Mammary epithelial cell (primary cell): ENCODE measurements at regions of chr9 and their contacts with region 1.

Region 1: GRCh38 chr9:122991370-122991830 is 42.1 kb upstream of the GPR21 start:
- DNase-seq: peak; percentile 89
- H3K4me3 ChIP-seq: no peak overlapping the region
- H3K27ac ChIP-seq: peak overlapping the region; percentile 34
- H3K4me1 ChIP-seq: peaks cover 6% of the 10 kb centered on the region
- H3K27me3 ChIP-seq: no peaks in the 10 kb centered on the region
- CTCF ChIP-seq: peak; percentile 66 to 72

Region 2: GRCh38 chr9:122464633-122465567 is 526.5 kb before region 1 on chr9:
- CTCF ChIA-PET with region 1: no interaction called
- dilution Hi-C with region 1: no loop called
- in situ Hi-C with region 1: no loop called
- intact Hi-C with region 1: loop called (anchors 2 kb)
- DNase-seq: peak; percentile 80
- H3K4me3 ChIP-seq: peak overlapping the region; percentile 47 to 72 (median 60)
- H3K27ac ChIP-seq: no peak overlapping the region
- H3K4me1 ChIP-seq: peaks cover 5% of the 10 kb centered on the region
- H3K27me3 ChIP-seq: no peaks in the 10 kb centered on the region
- CTCF ChIP-seq: peak; percentile 73 to 82

Region 3: GRCh38 chr9:122860317-122861142 is 130.9 kb before region 1 on chr9:
- CTCF ChIA-PET with region 1: no interaction called
- dilution Hi-C with region 1: no loop called
- in situ Hi-C with region 1: loop called in 1 of 2 experiments (anchors 25 kb)
- intact Hi-C with region 1: no loop called
- DNase-seq: no peak
- H3K4me3 ChIP-seq: no peak overlapping the region
- H3K27ac ChIP-seq: no peak overlapping the region
- H3K4me1 ChIP-seq: no peaks in the 10 kb centered on the region
- H3K27me3 ChIP-seq: no peaks in the 10 kb centered on the region
- CTCF ChIP-seq: no peak

Region 4: GRCh38 chr9:122904823-122905710 is 86.3 kb before region 1 on chr9 and contains the start of gene RC3H2:
- CTCF ChIA-PET with region 1: interaction called, 26 read pairs
- dilution Hi-C with region 1: no loop called
- in situ Hi-C with region 1: no loop called
- intact Hi-C with region 1: loop called (anchors 1 kb)
- DNase-seq: peak; percentile 100
- H3K4me3 ChIP-seq: peak within 1 kb of the TSS; percentile 64 to 88 (median 80)
- H3K27ac ChIP-seq: peak within 1 kb of the TSS; percentile 84
- H3K4me1 ChIP-seq: peaks cover 2% of the 10 kb centered on the region
- H3K27me3 ChIP-seq: no peaks in the 10 kb centered on the region
- CTCF ChIP-seq: no peak
- total RNA-seq, gene RC3H2: 55.6 to 68.7 TPM

Region 5: GRCh38 chr9:122931226-122932121 is 59.9 kb before region 1 on chr9 and contains the start of gene ZBTB26:
- CTCF ChIA-PET with region 1: no interaction called
- dilution Hi-C with region 1: no loop called
- in situ Hi-C with region 1: no loop called
- intact Hi-C with region 1: loop called (anchors 1 kb)
- DNase-seq: peak; percentile 94
- H3K4me3 ChIP-seq: peak within 1 kb of the TSS; percentile 85 to 93 (median 91)
- H3K27ac ChIP-seq: peak within 1 kb of the TSS; percentile 77
- H3K4me1 ChIP-seq: peaks cover 14% of the 10 kb centered on the region
- H3K27me3 ChIP-seq: no peaks in the 10 kb centered on the region
- CTCF ChIP-seq: no peak
- total RNA-seq, gene ZBTB26: 3.0 to 5.0 TPM

Region 6: DNA sequence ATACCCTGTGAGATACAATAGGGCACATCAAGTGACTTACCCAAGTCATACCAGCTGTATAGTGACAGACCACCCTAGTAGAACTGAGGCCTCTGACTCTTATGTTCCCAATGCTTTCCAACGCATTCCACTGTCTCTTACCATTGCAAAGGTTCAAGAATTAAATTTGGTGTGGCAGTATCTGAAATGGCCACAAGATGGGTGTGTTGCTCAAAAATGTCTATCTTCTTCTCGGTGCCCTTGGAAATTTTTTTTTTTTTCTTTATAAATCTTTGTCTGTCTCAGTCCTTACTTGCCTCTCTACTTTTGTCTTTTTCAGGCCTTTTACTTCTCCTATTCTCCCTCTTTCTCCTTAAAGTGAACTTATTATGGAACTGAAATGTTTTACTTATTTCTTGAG is 90.4 kb after region 1 on chr9:
- CTCF ChIA-PET with region 1: no interaction called
- dilution Hi-C with region 1: no loop called
- in situ Hi-C with region 1: no loop called
- intact Hi-C with region 1: no loop called
- DNase-seq: peak; percentile 23
- H3K4me3 ChIP-seq: no peak overlapping the region
- H3K27ac ChIP-seq: no peak overlapping the region
- H3K4me1 ChIP-seq: peaks cover 3% of the 10 kb centered on the region
- H3K27me3 ChIP-seq: no peaks in the 10 kb centered on the region
- CTCF ChIP-seq: peak; percentile 52 to 61